Posterior cingulate gyrus (tissue), 11 donors: ENCODE measurements at regions of chr22 and their contacts with region 1.

Region 1: GRCh38 chr22:46122511-46122971 is 27.8 kb upstream of the PPARA start:
- DNase-seq: peak in 9 of 10 donors; percentile 64 to 96 (median 77)

Region 2: DNA sequence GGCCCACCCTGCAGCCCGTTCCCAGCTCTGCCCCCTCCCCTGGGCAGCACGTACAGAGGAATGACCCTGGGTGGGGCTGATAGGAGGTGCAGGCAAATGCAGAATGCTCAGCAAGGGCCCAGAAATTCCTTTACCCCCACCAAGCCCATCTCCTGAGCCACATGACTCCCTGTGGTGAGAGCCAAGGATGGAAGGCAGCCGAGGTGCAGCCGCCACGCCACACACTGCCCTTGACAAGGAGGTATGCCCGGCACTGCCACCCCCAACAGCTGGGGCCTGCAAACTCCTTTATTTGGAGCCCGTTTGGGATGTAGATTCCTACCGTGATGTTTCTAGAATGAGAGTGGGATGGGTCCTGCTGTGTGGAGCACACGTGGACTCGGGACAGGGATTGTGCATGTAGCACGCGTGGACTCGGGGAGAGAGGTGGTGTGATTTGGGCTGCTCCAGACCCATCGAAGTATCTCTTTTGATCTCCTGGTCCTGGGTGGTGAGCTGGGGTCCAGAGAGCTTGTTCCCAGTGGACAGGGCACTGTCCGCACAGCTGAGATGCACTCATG is 187.1 kb after region 1 on chr22:
- intact Hi-C with region 1: loop called (anchors 1 kb)
- DNase-seq: peak in 2 of 10 donors; percentile 39 to 63